ENCODE measurements at regions of chr14 and their contacts with region 1.

Region 1: GRCh38 chr14:20469242-20469889 is at the start of gene PNP:
- DNase-seq: peak; percentile 92
- ATAC-seq: peak; percentile 94
- H3K4me3 Mint-ChIP-seq: peak within 1 kb of the TSS; percentile 86
- H3K27ac Mint-ChIP-seq: peak within 1 kb of the TSS; percentile 93
- H3K4me1 Mint-ChIP-seq: peaks cover 33% of the 10 kb centered on the region
- H3K27me3 Mint-ChIP-seq: no peaks in the 10 kb centered on the region
- CTCF ChIP-seq: no peak
- total RNA-seq, gene PNP: 176 to 183 TPM

Region 2: GRCh38 chr14:20427231-20428009 is 41.9 kb before region 1 on chr14:
- CTCF ChIA-PET with region 1: no interaction called
- POLR2A ChIA-PET with region 1: interaction called, 11 read pairs
- intact Hi-C with region 1: no loop called
- DNase-seq: peak; percentile 26
- ATAC-seq: peak; percentile 72
- H3K4me3 Mint-ChIP-seq: peak overlapping the region; percentile 63
- H3K27ac Mint-ChIP-seq: peak overlapping the region; percentile 91
- H3K4me1 Mint-ChIP-seq: peaks cover 42% of the 10 kb centered on the region
- H3K27me3 Mint-ChIP-seq: no peaks in the 10 kb centered on the region
- CTCF ChIP-seq: no peak